ENCODE measurements at regions of chr17 and their contacts with region 1.

Region 1: GRCh38 chr17:27601069-27601975 is 29.7 kb upstream of the LGALS9 start:
- DNase-seq: peak; percentile 91
- H3K4me3 Mint-ChIP-seq: no peak overlapping the region
- H3K27ac Mint-ChIP-seq: no peak overlapping the region
- H3K4me1 Mint-ChIP-seq: peaks cover 11% of the 10 kb centered on the region
- H3K27me3 Mint-ChIP-seq: no peaks in the 10 kb centered on the region

Region 2: DNA sequence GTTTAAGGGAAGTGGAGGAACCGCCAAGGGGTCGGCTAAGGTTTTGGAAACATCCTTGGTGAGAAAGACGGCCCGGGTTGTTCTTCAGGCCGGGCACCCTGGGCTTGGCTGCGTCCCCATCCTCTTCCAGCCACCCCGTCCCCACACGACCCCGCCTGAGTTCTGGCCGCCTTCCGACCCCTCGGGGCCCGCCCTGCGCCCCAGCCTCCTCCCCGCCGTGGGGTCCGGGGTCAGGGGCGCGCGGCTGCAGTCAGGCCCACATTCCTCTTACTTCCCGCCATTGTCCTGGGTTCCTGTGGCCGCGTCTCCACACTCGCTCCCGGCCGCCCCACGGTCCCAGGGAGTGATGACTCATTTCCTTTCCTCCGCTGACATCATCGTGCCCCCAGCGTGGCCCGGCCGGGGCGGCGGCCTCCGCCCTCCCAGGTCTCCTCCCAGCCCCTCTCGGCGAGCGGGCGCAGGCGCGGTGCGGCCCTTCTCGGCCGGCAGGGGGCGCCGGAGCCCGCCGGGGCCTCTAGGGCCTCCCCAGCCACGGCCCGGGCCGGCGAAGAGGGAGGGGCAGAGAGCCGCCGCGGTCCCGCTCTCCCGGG is 247.8 kb before region 1 on chr17:
- CTCF ChIA-PET with region 1: interaction called, 63 read pairs
- intact Hi-C with region 1: loop called (anchors 1 kb)
- DNase-seq: peak; percentile 86
- H3K4me3 Mint-ChIP-seq: peak overlapping the region; percentile 89
- H3K27ac Mint-ChIP-seq: peak overlapping the region; percentile 93
- H3K4me1 Mint-ChIP-seq: peaks cover 23% of the 10 kb centered on the region
- H3K27me3 Mint-ChIP-seq: no peaks in the 10 kb centered on the region

Region 3: GRCh38 chr17:27407916-27408846 is 193.1 kb before region 1 on chr17:
- CTCF ChIA-PET with region 1: interaction called, 11 read pairs
- intact Hi-C with region 1: no loop called
- DNase-seq: no peak
- H3K4me3 Mint-ChIP-seq: no peak overlapping the region
- H3K27ac Mint-ChIP-seq: no peak overlapping the region
- H3K4me1 Mint-ChIP-seq: no peaks in the 10 kb centered on the region
- H3K27me3 Mint-ChIP-seq: no peaks in the 10 kb centered on the region

Region 4: DNA sequence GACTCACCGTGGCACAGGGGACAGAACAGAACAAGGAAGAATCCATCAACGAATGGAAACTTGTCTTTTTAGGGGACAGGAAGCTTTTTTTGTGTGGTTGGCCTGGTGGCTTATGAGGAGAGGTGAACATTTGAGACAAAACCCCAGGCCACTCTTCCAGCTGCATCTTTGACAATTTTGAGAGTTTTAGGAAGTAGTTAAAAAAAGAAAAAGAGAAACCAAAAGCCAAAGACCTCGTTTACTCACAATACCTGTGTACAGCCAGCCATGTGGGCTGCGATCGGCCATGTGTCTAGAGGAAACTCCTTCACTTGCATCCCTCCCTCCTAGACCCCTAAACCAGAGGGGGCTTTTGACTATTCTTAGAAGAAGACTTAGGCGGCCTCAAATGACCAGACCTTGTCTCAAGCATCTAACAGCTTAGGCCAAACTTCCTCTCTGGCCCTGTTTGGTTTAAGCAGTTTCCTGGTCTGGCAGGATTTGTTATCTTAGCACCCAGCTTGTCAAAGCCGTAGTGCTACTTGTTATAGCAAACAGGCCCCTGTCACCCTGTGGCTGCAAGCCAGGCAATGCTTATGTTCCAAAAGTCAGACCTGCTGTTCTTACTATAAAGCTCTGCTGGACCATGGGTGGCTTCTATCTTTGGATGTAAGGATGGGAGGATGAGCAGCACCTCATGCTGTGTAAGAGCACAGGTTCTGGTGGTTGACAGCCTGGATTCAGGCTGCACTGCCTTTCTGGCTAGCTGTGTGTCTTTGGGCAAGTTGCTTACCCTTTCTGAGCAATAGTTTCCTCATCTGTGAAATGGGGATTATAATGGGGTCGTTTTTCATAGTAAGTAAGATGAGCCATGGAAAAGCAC is 127.3 kb before region 1 on chr17:
- CTCF ChIA-PET with region 1: interaction called, 11 read pairs
- intact Hi-C with region 1: no loop called
- DNase-seq: peak; percentile 94
- H3K4me3 Mint-ChIP-seq: peak overlapping the region; percentile 45
- H3K27ac Mint-ChIP-seq: peak overlapping the region; percentile 97
- H3K4me1 Mint-ChIP-seq: peaks cover 93% of the 10 kb centered on the region
- H3K27me3 Mint-ChIP-seq: no peaks in the 10 kb centered on the region

Region 5: GRCh38 chr17:27578718-27579085 is 22.6 kb before region 1 on chr17:
- CTCF ChIA-PET with region 1: interaction called, 54 read pairs
- intact Hi-C with region 1: loop called (anchors 1 kb)
- DNase-seq: peak; percentile 93
- H3K4me3 Mint-ChIP-seq: no peak overlapping the region
- H3K27ac Mint-ChIP-seq: peak overlapping the region; percentile 93
- H3K4me1 Mint-ChIP-seq: peaks cover 67% of the 10 kb centered on the region
- H3K27me3 Mint-ChIP-seq: no peaks in the 10 kb centered on the region

Region 6: DNA sequence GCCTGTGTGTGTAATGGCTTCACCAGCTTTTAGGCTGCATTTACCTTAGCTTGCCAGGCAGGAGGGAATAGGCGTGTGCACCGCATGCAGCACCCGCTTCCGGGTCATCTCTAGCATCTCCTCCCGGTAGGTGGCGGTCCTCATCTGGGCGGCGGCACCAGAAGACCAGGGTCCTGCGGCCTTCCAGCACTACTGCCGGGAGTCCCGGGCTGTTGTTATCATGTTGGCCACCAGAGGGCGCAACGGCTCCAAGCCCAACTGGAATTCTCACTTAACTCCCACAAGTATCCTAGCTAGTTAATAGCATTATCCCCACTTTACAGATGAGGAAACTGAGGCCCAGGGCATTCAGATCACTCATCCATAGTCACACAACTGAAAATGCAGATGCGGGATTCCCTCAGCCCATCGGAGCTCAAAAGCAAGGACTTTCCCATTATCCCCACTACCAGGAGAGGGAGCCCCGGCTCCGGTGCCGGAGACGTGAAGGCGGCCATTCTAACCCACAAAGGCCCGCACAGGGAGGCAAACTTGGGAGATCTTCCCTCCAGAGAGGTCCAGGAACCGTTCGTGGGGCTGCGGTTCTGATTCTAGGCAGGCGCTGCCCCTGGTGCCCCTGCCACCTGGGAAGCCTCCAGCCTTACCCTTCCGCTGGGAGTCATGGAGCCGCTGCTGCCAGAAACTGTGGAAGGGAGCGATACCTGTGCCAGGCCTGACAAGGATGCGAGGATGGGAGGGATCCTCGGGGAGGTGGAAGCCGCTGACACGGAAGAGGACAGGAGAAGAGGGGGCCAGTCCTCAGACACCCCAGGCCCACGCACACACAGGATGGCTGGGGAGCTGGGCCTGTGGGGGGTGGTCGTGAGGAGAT is 53.6 kb after region 1 on chr17:
- CTCF ChIA-PET with region 1: interaction called, 124 read pairs
- intact Hi-C with region 1: loop called (anchors 1 kb)
- DNase-seq: peak; percentile 82
- H3K4me3 Mint-ChIP-seq: no peak overlapping the region
- H3K27ac Mint-ChIP-seq: no peak overlapping the region
- H3K4me1 Mint-ChIP-seq: peaks cover 6% of the 10 kb centered on the region
- H3K27me3 Mint-ChIP-seq: no peaks in the 10 kb centered on the region

Region 7: GRCh38 chr17:27666831-27667560 is 65.7 kb after region 1 on chr17:
- CTCF ChIA-PET with region 1: no interaction called
- intact Hi-C with region 1: no loop called
- DNase-seq: no peak
- H3K4me3 Mint-ChIP-seq: no peak overlapping the region
- H3K27ac Mint-ChIP-seq: no peak overlapping the region
- H3K4me1 Mint-ChIP-seq: no peaks in the 10 kb centered on the region
- H3K27me3 Mint-ChIP-seq: no peaks in the 10 kb centered on the region